ENCODE measurements at regions of chr2 and their contacts with region 1.

Region 1: DNA sequence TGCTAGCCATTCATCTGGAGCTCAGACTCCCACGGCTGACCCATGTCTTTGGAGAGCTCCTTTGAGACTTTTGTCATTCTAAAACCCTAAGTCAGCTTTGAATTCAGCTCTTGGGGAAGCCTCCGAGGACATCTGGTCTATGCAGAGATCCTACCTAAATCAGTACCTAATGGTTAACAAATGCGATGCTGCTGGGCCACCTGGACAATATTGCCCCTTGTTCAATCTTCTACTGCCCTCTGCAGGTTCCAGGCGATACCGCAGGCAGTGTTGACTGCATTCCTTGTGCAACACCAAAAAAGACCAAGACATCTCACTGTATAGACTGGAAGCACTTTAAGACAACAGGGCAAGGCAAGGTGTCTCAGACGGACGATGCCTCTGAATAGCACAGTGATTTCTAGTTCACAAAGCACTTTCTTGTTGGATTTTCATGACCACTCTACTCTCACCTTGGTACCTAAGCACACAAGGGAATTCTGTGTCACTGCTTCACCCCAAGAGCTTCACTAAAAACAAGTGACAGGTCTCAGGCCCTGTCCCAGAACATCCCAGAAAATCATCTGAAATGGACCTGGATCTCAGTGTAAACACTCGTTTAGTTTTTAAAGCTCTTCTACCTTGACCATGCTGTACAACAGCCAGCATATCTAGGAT is 80.9 kb downstream of the XDH start:
- DNase-seq: peak; percentile 83
- H3K4me3 ChIP-seq: no peak overlapping the region
- H3K27ac ChIP-seq: no peak overlapping the region
- H3K4me1 ChIP-seq: no peaks in the 10 kb centered on the region
- H3K27me3 ChIP-seq: no peaks in the 10 kb centered on the region
- CTCF ChIP-seq: peak; percentile 97

Region 2: GRCh38 chr2:30165050-30165520 is 1168.6 kb before region 1 on chr2:
- CTCF ChIA-PET with region 1: no interaction called
- POLR2A ChIA-PET with region 1: no interaction called
- intact Hi-C with region 1: loop called (anchors 5 kb)
- DNase-seq: peak; percentile 96
- H3K4me3 ChIP-seq: no peak overlapping the region
- H3K27ac ChIP-seq: peak overlapping the region; percentile 13
- H3K4me1 ChIP-seq: peaks cover 25% of the 10 kb centered on the region
- H3K27me3 ChIP-seq: no peaks in the 10 kb centered on the region
- CTCF ChIP-seq: peak; percentile 97

Region 3: DNA sequence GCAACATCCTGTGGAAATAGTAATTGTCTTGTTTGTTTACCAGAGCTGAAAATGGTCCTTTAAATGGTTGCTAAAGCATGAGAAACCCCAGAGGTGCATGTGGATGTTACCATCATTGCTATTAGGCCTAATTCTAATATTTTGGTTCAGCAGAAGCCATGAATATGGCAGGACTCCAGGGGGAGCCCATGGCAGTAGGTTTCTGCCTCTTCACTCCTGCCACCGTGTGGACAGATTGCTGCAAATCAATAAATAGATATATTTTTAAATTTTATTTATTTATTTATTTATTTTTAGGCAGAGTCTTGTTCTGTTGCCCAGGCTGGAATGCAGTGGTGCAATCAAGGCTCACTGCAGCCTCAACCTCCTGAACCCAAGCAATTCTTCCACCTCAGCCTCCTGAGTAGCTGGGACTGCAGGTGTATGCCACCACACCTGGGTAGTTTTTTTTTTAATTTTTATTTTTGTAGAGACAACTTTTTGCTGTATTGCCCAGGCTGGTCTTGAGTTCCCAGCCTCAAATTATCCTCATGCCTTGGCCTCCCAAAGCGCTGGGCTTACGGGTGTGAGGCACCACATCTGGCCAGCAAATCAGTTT is 471.5 kb before region 1 on chr2:
- CTCF ChIA-PET with region 1: no interaction called
- POLR2A ChIA-PET with region 1: no interaction called
- intact Hi-C with region 1: loop called (anchors 5 kb)
- DNase-seq: peak; percentile 85
- H3K4me3 ChIP-seq: no peak overlapping the region
- H3K27ac ChIP-seq: no peak overlapping the region
- H3K4me1 ChIP-seq: no peaks in the 10 kb centered on the region
- H3K27me3 ChIP-seq: no peaks in the 10 kb centered on the region
- CTCF ChIP-seq: peak; percentile 74

Region 4: GRCh38 chr2:31170071-31170698 is 163.5 kb before region 1 on chr2:
- CTCF ChIA-PET with region 1: interaction called, 5 read pairs
- POLR2A ChIA-PET with region 1: no interaction called
- intact Hi-C with region 1: loop called (anchors 2 kb)
- DNase-seq: peak; percentile 72
- H3K4me3 ChIP-seq: no peak overlapping the region
- H3K27ac ChIP-seq: no peak overlapping the region
- H3K4me1 ChIP-seq: no peaks in the 10 kb centered on the region
- H3K27me3 ChIP-seq: peaks cover 6% of the 10 kb centered on the region
- CTCF ChIP-seq: peak; percentile 93

Region 5: DNA sequence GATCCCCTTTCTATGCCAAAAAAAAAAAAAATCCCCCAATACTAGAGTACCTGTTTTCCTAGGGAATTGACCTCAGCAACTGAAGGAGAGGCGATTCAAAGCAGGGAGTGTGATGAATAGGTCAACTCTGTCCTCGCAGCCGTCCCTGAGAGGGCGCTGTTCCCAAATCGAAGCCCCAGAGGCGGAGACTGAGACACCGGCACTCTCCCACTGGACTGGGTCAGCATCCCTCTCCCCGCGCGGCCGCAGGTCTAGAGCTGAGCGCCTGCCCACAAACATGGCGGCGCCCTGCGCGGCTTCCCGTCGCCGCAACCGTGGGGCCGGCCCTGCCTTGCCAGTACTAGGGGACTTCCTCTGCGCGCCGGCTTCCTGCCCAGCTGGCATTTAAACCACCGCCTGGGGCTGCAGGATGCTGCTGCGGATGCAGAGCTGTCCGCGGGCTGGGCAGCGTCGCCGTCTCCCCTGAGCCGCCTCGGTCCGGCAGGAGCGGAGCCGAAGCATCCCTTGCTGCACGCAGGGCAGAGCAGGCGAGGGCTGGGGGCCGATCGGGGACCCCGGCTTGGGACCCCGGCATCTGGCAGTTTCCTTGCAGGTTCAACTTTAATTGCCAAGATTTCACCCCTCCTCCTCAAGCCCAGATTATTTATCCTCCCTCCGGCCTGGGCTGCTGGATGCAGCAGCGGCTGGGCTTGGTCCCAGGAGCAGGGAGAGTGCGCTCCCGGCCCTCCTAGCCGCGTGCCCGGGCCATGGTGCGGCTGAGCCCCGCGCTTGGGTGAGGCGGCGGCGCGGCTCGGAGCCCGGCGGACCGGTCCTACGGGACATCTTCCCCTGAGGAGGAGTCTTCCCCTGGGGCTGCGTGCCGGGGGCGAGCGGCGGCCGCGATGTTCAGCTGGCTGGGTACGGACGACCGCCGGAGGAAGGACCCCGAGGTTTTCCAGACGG is 99.6 kb before region 1 on chr2 and contains the start of gene EHD3:
- CTCF ChIA-PET with region 1: interaction called, 4 read pairs
- POLR2A ChIA-PET with region 1: no interaction called
- intact Hi-C with region 1: loop called (anchors 2 kb)
- DNase-seq: peak; percentile 94
- H3K4me3 ChIP-seq: peak within 1 kb of the TSS; percentile 55
- H3K27ac ChIP-seq: no peak within 1 kb of the TSS
- H3K4me1 ChIP-seq: peaks cover 5% of the 10 kb centered on the region
- H3K27me3 ChIP-seq: peaks cover 7% of the 10 kb centered on the region
- CTCF ChIP-seq: peak; percentile 60
- total RNA-seq, gene EHD3: 4.4 and 4.8 TPM in 2 replicates

Region 6: DNA sequence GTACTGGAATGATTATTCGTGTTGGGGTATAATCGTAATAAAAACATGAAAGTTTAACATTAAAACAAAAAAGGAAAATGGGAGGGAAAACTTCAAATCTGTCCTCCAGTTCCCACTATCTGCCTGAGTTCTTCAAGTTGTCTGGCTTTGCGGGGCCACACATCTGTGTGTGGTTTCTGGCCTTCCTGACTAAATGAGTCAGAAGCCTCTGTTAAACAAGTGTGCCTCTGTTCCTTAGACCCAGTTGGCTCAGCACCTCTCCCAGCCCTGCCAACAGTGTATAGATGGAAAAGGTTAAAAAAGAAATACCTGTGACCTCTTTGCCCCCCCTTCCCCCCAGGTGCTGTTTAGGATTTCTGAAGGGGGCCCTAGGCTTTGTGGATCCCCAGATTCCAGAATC is 50.7 kb after region 1 on chr2:
- CTCF ChIA-PET with region 1: no interaction called
- POLR2A ChIA-PET with region 1: no interaction called
- intact Hi-C with region 1: no loop called
- DNase-seq: no peak
- H3K4me3 ChIP-seq: no peak overlapping the region
- H3K27ac ChIP-seq: no peak overlapping the region
- H3K4me1 ChIP-seq: no peaks in the 10 kb centered on the region
- H3K27me3 ChIP-seq: no peaks in the 10 kb centered on the region
- CTCF ChIP-seq: no peak